Activated CD8-positive, alpha-beta T cell treated with anti-CD3 and anti-CD28 coated beads, Interleukin-2, amount 10 ng/mL, durations not matched to agents 7 days and 5 days (primary cell): ENCODE measurements at regions of chr2 and their contacts with region 1.

Region 1: GRCh38 chr2:88753833-88754584 is 62.5 kb downstream of the RPIA start:
- DNase-seq: peak; percentile 60
- ATAC-seq: peak; percentile 90
- H3K4me3 Mint-ChIP-seq: no peak overlapping the region
- H3K27ac Mint-ChIP-seq: peak overlapping the region; percentile 89
- H3K4me1 Mint-ChIP-seq: peaks cover 29% of the 10 kb centered on the region
- H3K27me3 Mint-ChIP-seq: no peaks in the 10 kb centered on the region

Region 2: DNA sequence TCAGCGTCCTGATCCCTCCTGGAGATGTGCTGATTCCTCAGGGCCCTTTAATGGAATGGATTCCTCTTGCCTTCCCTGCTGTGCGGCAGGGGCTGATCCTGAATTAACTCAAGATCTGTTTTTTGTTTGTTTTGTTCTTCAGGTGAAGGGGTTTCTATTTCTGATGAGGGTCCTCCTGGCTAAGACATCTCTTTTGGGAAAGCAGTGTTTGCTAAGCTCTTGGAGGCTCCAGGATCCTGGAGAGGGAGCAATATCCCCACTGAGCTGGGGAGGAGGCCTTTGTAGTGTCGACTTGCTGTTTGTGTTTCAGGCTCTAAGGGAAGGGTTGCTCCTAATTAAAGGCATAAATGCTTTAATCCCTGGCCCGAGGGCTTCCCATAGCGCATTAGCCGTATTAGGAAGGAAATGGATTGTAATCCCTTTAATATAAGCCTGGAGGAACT is 236.2 kb before region 1 on chr2:
- CTCF ChIA-PET with region 1: no interaction called
- POLR2A ChIA-PET with region 1: no interaction called
- DNase-seq: no peak
- ATAC-seq: no peak
- H3K4me3 Mint-ChIP-seq: no peak overlapping the region
- H3K27ac Mint-ChIP-seq: no peak overlapping the region
- H3K4me1 Mint-ChIP-seq: no peaks in the 10 kb centered on the region
- H3K27me3 Mint-ChIP-seq: peaks cover 8% of the 10 kb centered on the region

Region 3: GRCh38 chr2:88686320-88686719 is 67.7 kb before region 1 on chr2:
- CTCF ChIA-PET with region 1: no interaction called
- POLR2A ChIA-PET with region 1: no interaction called
- DNase-seq: no peak
- ATAC-seq: no peak
- H3K4me3 Mint-ChIP-seq: no peak overlapping the region
- H3K27ac Mint-ChIP-seq: no peak overlapping the region
- H3K4me1 Mint-ChIP-seq: peaks cover 20% of the 10 kb centered on the region
- H3K27me3 Mint-ChIP-seq: peaks cover 2% of the 10 kb centered on the region

Region 4: GRCh38 chr2:88724643-88725332 is 29.2 kb before region 1 on chr2:
- CTCF ChIA-PET with region 1: no interaction called
- POLR2A ChIA-PET with region 1: no interaction called
- DNase-seq: no peak
- ATAC-seq: no peak
- H3K4me3 Mint-ChIP-seq: no peak overlapping the region
- H3K27ac Mint-ChIP-seq: no peak overlapping the region
- H3K4me1 Mint-ChIP-seq: peaks cover 6% of the 10 kb centered on the region
- H3K27me3 Mint-ChIP-seq: no peaks in the 10 kb centered on the region

Region 5: GRCh38 chr2:88739985-88740600 is 13.9 kb before region 1 on chr2:
- CTCF ChIA-PET with region 1: interaction called, 47 read pairs
- POLR2A ChIA-PET with region 1: interaction called, 4 read pairs
- DNase-seq: peak; percentile 80
- ATAC-seq: peak; percentile 70
- H3K4me3 Mint-ChIP-seq: no peak overlapping the region
- H3K27ac Mint-ChIP-seq: no peak overlapping the region
- H3K4me1 Mint-ChIP-seq: peaks cover 16% of the 10 kb centered on the region
- H3K27me3 Mint-ChIP-seq: no peaks in the 10 kb centered on the region